Activated T-helper 1 cell treated with anti-CD3 and anti-CD28 coated beads, Interleukin-12 subunit alpha, Interleukin-12 subunit beta, Interleukin-2, Interleukin-4 antibody, amounts not matched to agents 30 ng/mL and 10 ng/mL and 1 ng/mL, durations not matched to agents 14 hours and 24 hours and 36 hours (primary cell): ENCODE measurements at regions of chr14 and their contacts with region 1.

Region 1: GRCh38 chr14:68248481-68249255 is 429.1 kb downstream of the RAD51B start:
- DNase-seq: no peak
- H3K4me3 Mint-ChIP-seq: no peak overlapping the region
- H3K27ac Mint-ChIP-seq: no peak overlapping the region
- H3K4me1 Mint-ChIP-seq: peaks cover 41% of the 10 kb centered on the region
- H3K27me3 Mint-ChIP-seq: no peaks in the 10 kb centered on the region

Region 2: GRCh38 chr14:67943947-67944346 is 304.7 kb before region 1 on chr14:
- intact Hi-C with region 1: loop called (anchors 5 kb)
- DNase-seq: no peak
- H3K4me3 Mint-ChIP-seq: no peak overlapping the region
- H3K27ac Mint-ChIP-seq: no peak overlapping the region
- H3K4me1 Mint-ChIP-seq: no peaks in the 10 kb centered on the region
- H3K27me3 Mint-ChIP-seq: no peaks in the 10 kb centered on the region

Region 3: GRCh38 chr14:68232300-68233055 is 16.2 kb before region 1 on chr14:
- intact Hi-C with region 1: loop called (anchors 2 kb)
- DNase-seq: peak; percentile 9
- H3K4me3 Mint-ChIP-seq: no peak overlapping the region
- H3K27ac Mint-ChIP-seq: no peak overlapping the region
- H3K4me1 Mint-ChIP-seq: peaks cover 7% of the 10 kb centered on the region
- H3K27me3 Mint-ChIP-seq: no peaks in the 10 kb centered on the region

Region 4: DNA sequence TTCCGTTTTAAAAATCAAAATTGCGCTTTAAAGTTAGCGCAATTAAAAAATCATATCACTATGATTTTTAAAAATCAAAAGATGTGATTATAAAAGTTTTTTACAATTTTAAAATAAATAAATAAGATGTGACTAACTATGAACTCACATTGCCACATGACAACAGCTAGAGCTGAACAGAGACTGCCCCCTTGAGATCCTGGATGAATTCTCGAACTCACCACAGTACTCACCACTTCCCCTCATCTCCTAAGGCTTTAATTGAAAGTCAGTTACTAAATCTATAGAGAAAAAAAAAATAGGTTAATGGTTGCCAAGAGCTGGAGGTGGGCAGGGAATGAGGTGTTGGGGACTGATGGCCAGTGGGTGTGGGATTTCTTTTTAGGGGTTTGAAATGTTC is 160.0 kb after region 1 on chr14:
- intact Hi-C with region 1: loop called (anchors 2 kb)
- DNase-seq: no peak
- H3K4me3 Mint-ChIP-seq: no peak overlapping the region
- H3K27ac Mint-ChIP-seq: no peak overlapping the region
- H3K4me1 Mint-ChIP-seq: peaks cover 34% of the 10 kb centered on the region
- H3K27me3 Mint-ChIP-seq: no peaks in the 10 kb centered on the region

Region 5: GRCh38 chr14:68788996-68789820 is 540.5 kb after region 1 on chr14:
- intact Hi-C with region 1: loop called (anchors 1 kb)
- DNase-seq: peak; percentile 82
- H3K4me3 Mint-ChIP-seq: peak overlapping the region; percentile 98
- H3K27ac Mint-ChIP-seq: peak overlapping the region; percentile 100
- H3K4me1 Mint-ChIP-seq: peaks cover 65% of the 10 kb centered on the region
- H3K27me3 Mint-ChIP-seq: no peaks in the 10 kb centered on the region